A549 (cell line): ENCODE measurements at regions of chr3 and their contacts with region 1.

Region 1: DNA sequence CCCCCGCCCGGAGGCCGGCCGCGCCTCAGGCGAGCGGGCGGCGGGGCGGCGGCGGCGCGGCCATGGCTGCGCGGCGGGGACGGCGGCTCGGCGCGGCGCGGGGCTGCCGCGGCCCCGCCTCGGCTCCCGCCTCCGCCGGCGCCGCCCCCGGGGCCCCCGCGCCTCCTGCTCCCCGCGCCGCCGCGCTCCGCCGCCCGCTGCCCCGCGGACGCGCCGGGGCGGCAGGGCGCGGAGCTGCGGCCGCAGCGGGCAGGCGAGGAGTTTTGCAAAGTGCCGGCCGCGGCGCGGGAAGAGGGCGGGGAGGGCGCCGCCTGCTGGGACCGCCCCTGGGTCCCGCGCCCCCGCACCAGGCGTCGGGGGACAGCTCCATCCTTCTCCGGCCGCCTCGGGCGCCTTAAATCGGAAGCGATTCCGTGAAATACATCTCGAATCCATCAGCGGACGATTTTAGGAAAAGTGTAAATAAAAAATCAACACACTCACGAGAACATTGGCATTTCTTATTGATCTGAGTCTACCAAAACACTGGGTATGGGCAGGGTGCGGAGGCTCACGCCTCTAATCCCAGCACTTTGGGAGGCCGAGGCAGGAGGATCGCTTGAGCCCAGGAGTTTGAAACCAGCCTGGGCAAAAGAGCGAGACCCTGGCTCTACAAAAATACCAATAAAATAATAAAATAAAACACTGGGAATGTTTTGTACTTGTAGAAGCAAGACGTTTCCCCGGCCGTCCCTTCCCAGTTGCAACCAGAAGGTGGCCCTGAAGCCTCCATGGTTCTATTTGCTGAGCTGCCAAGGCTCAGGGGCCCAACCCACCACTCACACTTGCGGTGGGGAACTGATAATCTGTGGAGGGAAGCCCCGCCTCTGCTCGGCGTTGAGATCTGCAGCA is 136.9 kb downstream of the NUP210 start:
- DNase-seq: peak; percentile 63 to 64
- ATAC-seq: peak; percentile 63 to 74
- H3K4me3 ChIP-seq: peak overlapping the region; percentile 83
- H3K27ac ChIP-seq: peak overlapping the region; percentile 71 to 83
- H3K4me1 ChIP-seq: peaks cover 6% of the 10 kb centered on the region; the same call in 1 of the 3 replicates
- CTCF ChIP-seq: peak; percentile 32; the same call in 2 of the 3 replicates
- EP300 ChIP-seq: no peak
- POLR2A ChIP-seq: no peak
- RAD21 ChIP-seq: peak; percentile 27 to 38; a peak in 3 of 5 replicates

Region 2: DNA sequence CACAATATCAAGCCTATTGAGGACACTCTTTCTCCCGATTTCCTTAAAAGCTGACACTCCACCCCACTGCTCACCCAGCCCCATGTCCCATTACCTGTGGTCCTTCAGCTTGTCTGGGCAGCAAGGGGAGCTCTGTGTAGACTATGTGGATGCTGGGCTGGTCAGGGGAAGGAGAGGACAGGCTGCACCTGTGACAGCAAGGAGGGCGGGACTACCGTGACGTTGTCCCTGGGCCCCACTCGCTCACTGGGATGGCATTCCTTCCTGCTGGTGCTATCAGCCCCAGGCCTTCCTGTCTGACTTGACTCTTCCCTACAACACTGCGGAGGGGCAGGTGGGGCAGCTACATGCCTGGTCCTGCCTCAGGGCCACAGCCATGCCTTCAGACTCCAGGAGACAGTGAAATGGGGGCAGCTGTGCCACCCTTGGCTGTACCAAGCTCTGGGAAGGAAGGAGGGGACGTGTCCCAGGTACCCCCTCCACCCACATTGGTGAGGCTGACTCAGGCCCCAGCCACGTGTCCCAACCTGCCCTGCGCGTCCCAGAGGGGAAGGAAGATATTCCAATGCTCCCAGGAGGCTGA is 524.0 kb before region 1 on chr3 and contains the start of gene TMEM40:
- CTCF ChIA-PET with region 1: no interaction called
- POLR2A ChIA-PET with region 1: no interaction called
- DNase-seq: peak in 1 of 2 experiments; percentile 32
- ATAC-seq: no peak
- H3K4me3 ChIP-seq: no peak within 1 kb of the TSS
- H3K27ac ChIP-seq: peak within 1 kb of the TSS in 1 of 2 experiments; percentile 79; a peak in 4 of 6 replicates
- H3K4me1 ChIP-seq: peaks cover 34% of the 10 kb centered on the region
- CTCF ChIP-seq: no peak
- EP300 ChIP-seq: no peak
- POLR2A ChIP-seq: no peak
- RAD21 ChIP-seq: no peak
- polyA plus RNA-seq, gene TMEM40: 0.13 and 0.32 TPM in 2 replicates

Region 3: DNA sequence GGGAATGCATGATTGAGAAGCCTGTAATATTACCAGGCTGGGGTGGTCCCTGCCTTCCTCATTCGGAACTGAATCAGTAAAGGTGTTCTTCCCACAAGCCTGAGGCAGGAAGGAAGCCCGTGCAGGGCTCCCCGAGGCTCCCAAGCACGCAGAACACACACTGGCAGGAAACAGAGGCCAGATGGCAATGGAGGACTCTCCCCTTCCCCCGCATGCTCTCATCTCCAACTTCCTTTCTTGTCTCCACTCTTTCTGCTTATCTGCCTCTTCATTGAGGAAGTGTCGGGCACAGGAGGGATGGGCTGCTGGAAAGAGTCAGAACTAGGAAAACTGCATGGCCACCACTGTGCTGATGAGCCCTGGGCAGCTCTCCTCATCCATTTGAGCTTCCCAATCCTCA is 13.4 kb after region 1 on chr3:
- CTCF ChIA-PET with region 1: interaction called, 12 read pairs
- POLR2A ChIA-PET with region 1: no interaction called
- DNase-seq: no peak
- ATAC-seq: no peak
- H3K4me3 ChIP-seq: no peak overlapping the region
- H3K27ac ChIP-seq: no peak overlapping the region
- H3K4me1 ChIP-seq: peaks cover 6% of the 10 kb centered on the region
- CTCF ChIP-seq: no peak
- EP300 ChIP-seq: no peak
- POLR2A ChIP-seq: no peak
- RAD21 ChIP-seq: no peak

Region 4: DNA sequence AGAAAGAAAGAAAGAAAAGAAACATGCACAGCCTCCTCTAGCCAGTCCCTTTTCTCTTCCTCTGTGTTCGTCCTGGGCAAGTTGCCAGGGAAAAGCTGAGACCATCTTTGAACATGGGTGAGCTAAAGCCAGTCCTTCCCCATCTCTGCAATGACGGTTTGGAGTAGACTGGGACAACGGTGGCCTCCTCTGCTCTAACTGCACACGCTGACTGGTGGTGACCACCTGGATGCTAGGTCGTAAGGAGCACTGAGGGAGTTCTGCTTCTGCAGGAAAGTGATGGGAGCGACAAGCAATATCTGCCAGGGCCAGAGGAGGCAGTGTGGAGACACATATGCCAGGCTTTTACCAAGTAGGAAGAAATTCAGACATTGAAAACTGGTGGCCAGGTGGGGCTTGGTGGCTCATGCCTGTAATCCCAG is 25.2 kb after region 1 on chr3:
- CTCF ChIA-PET with region 1: interaction called, 15 read pairs
- POLR2A ChIA-PET with region 1: no interaction called
- DNase-seq: peak; percentile 71 to 80
- ATAC-seq: peak; percentile 91 to 92
- H3K4me3 ChIP-seq: no peak overlapping the region
- H3K27ac ChIP-seq: no peak overlapping the region
- H3K4me1 ChIP-seq: no peaks in the 10 kb centered on the region
- CTCF ChIP-seq: peak; percentile 45
- EP300 ChIP-seq: no peak
- POLR2A ChIP-seq: no peak
- RAD21 ChIP-seq: peak; percentile 33 to 44; a peak in 4 of 5 replicates